GM10248 (cell line): ENCODE measurements at regions of chr14 and their contacts with region 1.

Region 1: GRCh38 chr14:60323199-60323896 is 74.3 kb downstream of the PPM1A start:
- DNase-seq: no peak
- CTCF ChIP-seq: no peak

Region 2: GRCh38 chr14:60102389-60102788 is 221.0 kb before region 1 on chr14:
- CTCF ChIA-PET with region 1: no interaction called
- POLR2A ChIA-PET with region 1: no interaction called
- DNase-seq: no peak
- CTCF ChIP-seq: no peak

Region 3: GRCh38 chr14:60311417-60311816 is 11.9 kb before region 1 on chr14:
- CTCF ChIA-PET with region 1: interaction called, 18 read pairs
- POLR2A ChIA-PET with region 1: no interaction called
- DNase-seq: no peak
- CTCF ChIP-seq: no peak

Region 4: DNA sequence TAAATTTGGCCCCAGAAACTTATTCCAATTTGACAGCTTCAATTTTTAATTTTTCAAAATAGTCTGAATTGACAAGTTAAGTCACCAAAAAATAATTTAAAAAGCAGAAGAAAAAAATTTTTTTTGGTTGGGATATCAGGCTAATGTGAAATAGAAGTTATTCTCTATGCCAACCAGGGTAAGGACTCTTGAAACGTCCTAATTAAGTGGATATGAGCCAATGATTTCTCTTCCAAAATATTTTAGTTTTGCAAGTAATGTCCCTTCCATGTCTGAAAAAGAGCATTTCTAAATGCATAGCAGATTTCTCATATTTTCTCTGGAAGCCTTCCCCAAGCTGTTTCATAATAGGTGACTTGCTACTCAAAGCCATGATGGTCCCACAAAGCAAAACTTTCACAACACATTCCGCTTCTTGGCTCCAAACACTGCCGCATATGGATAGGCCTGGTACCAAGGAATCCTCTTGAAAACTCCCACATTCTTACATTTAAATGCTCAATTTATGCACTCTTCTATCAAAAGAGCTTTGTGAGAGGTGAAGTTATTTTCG is 250.7 kb after region 1 on chr14:
- CTCF ChIA-PET with region 1: no interaction called
- POLR2A ChIA-PET with region 1: no interaction called
- DNase-seq: no peak
- CTCF ChIP-seq: no peak